Motor neuron (in vitro differentiated cells): ENCODE measurements at regions of chr6 and their contacts with region 1.

Region 1: DNA sequence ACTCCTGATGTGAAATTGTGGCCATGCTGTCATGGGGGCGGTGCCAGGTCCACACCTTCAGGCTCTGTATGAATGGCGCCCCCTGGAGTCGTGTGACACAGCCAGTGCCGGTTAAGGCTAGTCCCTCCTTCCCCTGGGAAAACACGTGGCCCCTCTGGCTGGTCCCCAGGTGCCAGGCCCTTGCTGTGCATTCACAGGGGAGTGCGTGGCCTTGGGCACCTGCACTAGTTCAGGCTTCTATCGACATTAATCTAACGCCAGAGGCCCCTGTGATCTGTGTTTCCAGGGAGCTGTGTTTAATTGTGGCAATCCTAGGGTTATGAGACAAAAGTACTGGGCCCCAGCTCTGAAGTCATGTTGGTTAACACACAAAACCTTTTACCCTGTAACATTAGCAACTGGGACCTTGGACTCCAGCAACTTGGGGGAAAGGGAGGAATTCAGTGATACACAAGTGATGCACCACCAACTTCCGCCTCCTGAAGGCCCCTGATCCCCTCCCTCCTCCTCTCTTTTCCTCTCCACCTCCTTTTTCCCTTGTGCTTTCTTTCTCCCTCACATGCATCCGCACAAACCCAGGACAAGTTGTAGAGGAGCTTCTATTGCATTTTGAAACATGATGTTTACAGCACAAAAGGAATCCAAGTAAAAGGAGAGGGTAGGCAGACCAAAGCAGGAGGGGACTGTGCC is 74.0 kb downstream of the SSR1 start:
- ATAC-seq: peak; percentile 29 to 95 (median 89)
- H3K4me3 ChIP-seq: no peak overlapping the region
- H3K27ac ChIP-seq: no peak overlapping the region
- H3K4me1 ChIP-seq: peaks cover 18 to 35% of the 10 kb centered on the region in 2 donors

Region 2: DNA sequence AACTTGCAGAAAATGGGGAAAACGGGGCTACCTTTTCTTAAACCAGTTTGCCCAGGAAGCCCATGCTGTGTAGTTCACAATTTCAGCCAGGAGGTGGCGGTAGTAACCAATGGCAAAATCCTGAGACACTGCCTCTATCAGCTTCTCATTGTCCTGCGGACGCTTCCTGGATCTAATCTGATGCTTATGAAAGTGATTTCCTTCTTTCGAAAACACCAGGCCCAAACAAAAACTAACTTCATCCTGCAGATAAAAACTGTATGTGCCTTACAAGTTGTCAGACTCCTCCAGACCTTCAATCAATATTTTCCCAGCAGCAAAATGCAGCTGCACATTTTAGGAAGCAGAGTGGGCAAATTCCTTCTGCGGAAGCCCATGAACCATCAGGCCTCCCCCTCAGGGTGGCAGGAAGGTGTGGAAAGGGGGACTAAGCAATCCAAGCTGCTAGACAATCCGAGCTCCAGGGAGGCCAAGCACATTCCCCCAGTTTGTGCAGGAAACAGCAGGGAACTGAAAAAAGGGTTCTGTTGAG is 562.1 kb before region 1 on chr6:
- in situ Hi-C with region 1: loop called in 3 of 9 experiments (anchors 25 kb)
- ATAC-seq: peak; percentile 13 to 65 (median 60)
- H3K4me3 ChIP-seq: no peak overlapping the region
- H3K27ac ChIP-seq: no peak overlapping the region
- H3K4me1 ChIP-seq: peaks cover 24 to 44% of the 10 kb centered on the region in 2 donors

Region 3: GRCh38 chr6:6724539-6725467 is 514.2 kb before region 1 on chr6:
- in situ Hi-C with region 1: loop called in 5 of 9 experiments (anchors 25 kb)
- ATAC-seq: peak; percentile 95 to 99 (median 96)
- H3K4me3 ChIP-seq: no peak overlapping the region
- H3K27ac ChIP-seq: no peak overlapping the region
- H3K4me1 ChIP-seq: peaks cover 17% of the 10 kb centered on the region in 2 donors

Region 4: GRCh38 chr6:6918216-6918983 is 320.6 kb before region 1 on chr6:
- in situ Hi-C with region 1: loop called in 1 of 9 experiments (anchors 25 kb)
- ATAC-seq: peak in 4 of 8 experiments; percentile 29 to 80 (median 60)
- H3K4me3 ChIP-seq: no peak overlapping the region
- H3K27ac ChIP-seq: no peak overlapping the region
- H3K4me1 ChIP-seq: no peaks in the 10 kb centered on the region

Region 5: DNA sequence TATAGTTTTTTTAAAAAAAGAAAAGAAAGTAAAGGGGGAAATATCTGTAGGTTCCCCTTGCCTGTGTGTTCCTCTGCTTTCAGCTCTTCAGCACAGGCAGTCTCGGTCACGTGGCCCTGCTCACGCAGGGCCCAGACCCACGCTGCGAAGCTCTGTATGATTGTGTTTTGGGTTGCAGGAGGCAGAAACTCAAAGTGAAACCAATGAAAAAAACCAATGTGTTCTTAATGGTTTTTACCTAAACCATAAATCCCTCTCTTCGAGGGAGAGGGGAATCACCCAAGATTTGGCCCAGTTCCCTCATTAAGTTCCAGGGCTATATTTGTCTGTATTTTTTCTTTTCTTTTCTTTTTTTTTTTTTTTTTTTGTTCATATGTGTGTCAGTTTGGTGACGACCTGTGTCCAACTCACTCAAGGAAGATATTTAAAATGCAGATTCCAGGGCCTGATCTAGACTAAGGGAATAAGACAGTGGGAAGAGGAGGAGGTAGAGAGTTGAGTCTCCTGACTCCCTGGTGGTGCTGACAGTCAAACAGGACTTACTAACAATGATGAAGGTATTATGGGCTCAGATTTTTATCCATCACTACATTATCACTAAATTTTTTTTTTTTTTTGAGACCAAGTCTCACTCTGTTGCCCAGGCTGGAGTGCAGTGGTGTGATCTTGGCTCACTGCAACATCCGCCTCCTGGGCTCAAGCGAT is 165.1 kb before region 1 on chr6:
- in situ Hi-C with region 1: no loop called
- ATAC-seq: peak in 2 of 8 experiments; percentile 30 to 48
- H3K4me3 ChIP-seq: no peak overlapping the region
- H3K27ac ChIP-seq: no peak overlapping the region
- H3K4me1 ChIP-seq: no peaks in the 10 kb centered on the region

Region 6: GRCh38 chr6:7086488-7086887 is 152.6 kb before region 1 on chr6:
- in situ Hi-C with region 1: no loop called
- ATAC-seq: peak in 5 of 8 experiments; percentile 53 to 90 (median 78)
- H3K4me3 ChIP-seq: no peak overlapping the region
- H3K27ac ChIP-seq: no peak overlapping the region
- H3K4me1 ChIP-seq: peaks cover 11 to 16% of the 10 kb centered on the region in 2 donors